Activated CD4-positive, alpha-beta T cell treated with anti-CD3 and anti-CD28 coated beads, Interleukin-2, amount 10 ng/mL, durations not matched to agents 7 days and 5 days (primary cell): ENCODE measurements at regions of chr15 and their contacts with region 1.

Region 1: DNA sequence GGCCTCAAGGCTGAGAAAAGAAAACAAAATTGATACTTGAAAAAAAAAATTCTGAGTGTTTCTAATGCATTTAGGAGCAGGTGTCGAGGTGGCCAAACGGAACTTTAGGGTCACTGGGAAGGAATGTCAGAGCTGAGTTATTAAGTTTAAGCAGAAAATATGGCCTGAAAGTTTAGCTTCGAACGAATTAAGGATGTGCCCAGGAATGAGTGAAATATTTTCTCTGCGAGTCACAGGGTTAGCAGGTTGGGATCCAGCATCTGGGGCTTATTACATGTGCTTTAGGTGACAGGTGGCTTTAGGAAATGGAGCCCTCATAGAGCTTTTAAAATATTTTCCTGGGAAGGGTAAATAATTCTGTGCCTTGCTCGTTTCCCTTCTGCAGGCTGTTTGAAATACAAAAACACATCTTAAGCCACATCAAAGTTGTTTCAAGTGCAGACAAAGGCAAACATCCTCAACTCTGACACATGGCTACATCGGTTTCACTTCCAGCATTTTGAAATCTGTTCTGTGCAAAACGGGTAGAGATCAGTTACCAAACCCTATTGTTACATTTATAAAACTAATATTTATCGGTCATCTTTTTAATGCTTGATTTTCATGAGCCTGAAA is 143.1 kb upstream of the ARRDC4 start:
- DNase-seq: peak; percentile 16
- H3K4me3 Mint-ChIP-seq: no peak overlapping the region
- H3K27ac Mint-ChIP-seq: peak overlapping the region; percentile 37
- H3K4me1 Mint-ChIP-seq: peaks cover 12% of the 10 kb centered on the region
- H3K27me3 Mint-ChIP-seq: peaks cover 5% of the 10 kb centered on the region

Region 2: DNA sequence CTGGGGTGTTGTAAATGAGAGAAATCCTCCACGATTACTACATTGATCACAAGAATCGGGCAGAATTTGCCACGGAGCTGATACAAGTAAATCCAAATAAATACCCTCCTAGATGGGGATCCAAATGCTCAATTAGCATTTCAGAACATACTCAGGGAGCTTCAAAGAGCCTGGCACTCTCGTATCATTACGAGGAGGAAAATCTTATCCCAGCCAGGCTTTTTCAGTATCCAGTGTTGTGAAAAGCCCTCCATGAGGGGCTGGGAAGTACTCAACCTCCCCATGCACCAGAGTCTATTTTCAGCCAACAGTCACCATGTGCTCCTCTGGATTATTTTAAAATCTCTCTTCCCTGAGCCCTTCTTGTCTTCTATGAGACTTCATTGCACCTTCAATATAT is 20.5 kb after region 1 on chr15:
- CTCF ChIA-PET with region 1: no interaction called
- POLR2A ChIA-PET with region 1: interaction called, 10 read pairs
- DNase-seq: no peak
- H3K4me3 Mint-ChIP-seq: no peak overlapping the region
- H3K27ac Mint-ChIP-seq: no peak overlapping the region
- H3K4me1 Mint-ChIP-seq: no peaks in the 10 kb centered on the region
- H3K27me3 Mint-ChIP-seq: no peaks in the 10 kb centered on the region

Region 3: DNA sequence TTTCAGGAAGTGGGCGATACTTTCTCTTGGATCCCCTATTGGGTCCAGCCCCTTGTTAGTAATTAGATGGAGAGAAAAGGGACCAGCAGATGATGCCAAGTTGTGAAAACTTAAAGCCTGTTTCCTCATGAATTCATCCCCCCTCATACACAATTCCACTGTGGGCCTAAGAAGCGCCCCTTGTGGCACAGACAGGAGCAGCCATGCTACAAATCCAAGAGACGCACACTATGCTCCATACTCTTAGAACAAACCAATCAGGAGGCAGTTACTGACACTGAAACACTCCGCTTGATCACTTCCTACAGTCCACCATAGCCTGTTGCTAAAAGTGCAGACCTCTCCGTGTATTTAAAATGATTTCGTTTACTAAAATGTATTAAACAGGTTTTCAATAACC is 31.8 kb after region 1 on chr15:
- CTCF ChIA-PET with region 1: no interaction called
- POLR2A ChIA-PET with region 1: no interaction called
- DNase-seq: no peak
- H3K4me3 Mint-ChIP-seq: no peak overlapping the region
- H3K27ac Mint-ChIP-seq: no peak overlapping the region
- H3K4me1 Mint-ChIP-seq: no peaks in the 10 kb centered on the region
- H3K27me3 Mint-ChIP-seq: no peaks in the 10 kb centered on the region